Left ventricle myocardium inferior (tissue), 1 donor: ENCODE measurements at regions of chr6 and their contacts with region 1.

Region 1: DNA sequence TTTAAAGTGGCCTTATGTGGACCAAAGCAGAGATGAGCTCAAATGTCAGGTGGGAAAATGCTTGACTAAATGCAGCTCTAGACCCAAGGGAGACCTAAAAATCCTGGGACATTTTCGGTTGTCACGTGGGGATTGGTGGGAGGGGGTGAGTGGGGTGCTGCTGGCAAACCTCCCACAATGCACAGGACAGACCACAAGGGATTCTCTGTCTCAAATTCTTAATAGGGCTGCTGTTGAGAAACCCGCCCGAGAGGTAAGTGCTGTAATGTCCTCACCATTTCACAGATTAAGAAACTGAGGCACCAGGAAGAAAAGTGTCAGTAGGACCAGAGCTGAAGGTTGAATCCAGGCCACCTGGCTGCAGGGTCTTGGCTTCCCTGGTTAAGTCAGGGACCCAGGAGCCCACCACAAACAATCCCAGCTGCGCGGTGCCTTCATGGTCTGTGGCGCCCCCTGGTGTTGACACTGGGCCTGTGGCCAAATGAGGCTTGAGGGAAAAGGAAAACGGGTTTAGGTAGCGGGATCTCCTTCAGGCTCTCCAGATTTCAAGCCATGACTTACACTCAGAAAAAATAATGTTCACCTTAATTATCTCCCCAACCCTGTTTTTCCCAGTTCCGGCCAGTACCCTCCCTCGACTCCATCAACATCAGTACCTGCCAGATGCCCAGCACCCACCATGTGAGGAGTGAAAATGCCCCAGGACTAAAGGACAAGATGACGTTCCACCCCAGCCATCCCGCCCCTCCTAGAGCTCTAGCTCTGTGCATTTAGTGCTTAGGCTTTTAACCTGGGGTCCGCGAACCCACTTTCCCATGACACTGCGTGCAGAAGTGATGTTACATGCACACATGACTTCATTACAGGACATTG is 7.2 kb downstream of the HLA-G start:
- DNase-seq: no peak
- H3K4me3 ChIP-seq: no peak overlapping the region
- H3K27ac ChIP-seq: no peak overlapping the region
- H3K4me1 ChIP-seq: no peaks in the 10 kb centered on the region
- H3K27me3 ChIP-seq: peaks cover 99% of the 10 kb centered on the region
- CTCF ChIP-seq: peak; percentile 94

Region 2: GRCh38 chr6:29685718-29686326 is 149.0 kb before region 1 on chr6:
- intact Hi-C with region 1: no loop called
- DNase-seq: peak; percentile 37
- H3K4me3 ChIP-seq: no peak overlapping the region
- H3K27ac ChIP-seq: no peak overlapping the region
- H3K4me1 ChIP-seq: no peaks in the 10 kb centered on the region
- H3K27me3 ChIP-seq: peaks cover 9% of the 10 kb centered on the region
- CTCF ChIP-seq: peak; percentile 64

Region 3: GRCh38 chr6:29705389-29706231 is 129.2 kb before region 1 on chr6:
- intact Hi-C with region 1: loop called (anchors 5 kb)
- DNase-seq: no peak
- H3K4me3 ChIP-seq: no peak overlapping the region
- H3K27ac ChIP-seq: no peak overlapping the region
- H3K4me1 ChIP-seq: no peaks in the 10 kb centered on the region
- H3K27me3 ChIP-seq: peaks cover 29% of the 10 kb centered on the region
- CTCF ChIP-seq: peak; percentile 75

Region 4: GRCh38 chr6:29737707-29738630 is 96.8 kb before region 1 on chr6:
- intact Hi-C with region 1: loop called (anchors 10 kb)
- DNase-seq: peak; percentile 34
- H3K4me3 ChIP-seq: no peak overlapping the region
- H3K27ac ChIP-seq: peak overlapping the region; percentile 11
- H3K4me1 ChIP-seq: peaks cover 16% of the 10 kb centered on the region
- H3K27me3 ChIP-seq: no peaks in the 10 kb centered on the region
- CTCF ChIP-seq: peak; percentile 77

Region 5: DNA sequence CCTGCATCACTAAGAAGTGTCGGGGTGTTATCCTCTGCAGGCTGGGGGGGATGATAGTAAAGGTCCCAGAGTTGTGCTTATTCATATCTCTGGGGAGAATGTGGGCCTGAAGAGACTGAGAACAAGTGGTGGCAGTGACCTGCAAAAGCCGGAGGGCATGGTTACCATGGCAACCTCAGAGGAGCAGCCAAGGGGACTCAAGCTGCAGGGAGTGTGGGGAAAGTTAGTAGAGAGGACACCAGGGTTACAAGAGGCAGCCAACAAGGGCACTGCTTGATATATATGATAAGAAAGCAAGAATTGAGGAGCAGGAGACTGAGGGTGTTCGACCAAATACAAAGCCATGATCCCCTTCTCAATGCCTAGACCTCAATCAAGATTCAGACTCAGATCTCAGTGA is 65.5 kb before region 1 on chr6:
- intact Hi-C with region 1: no loop called
- DNase-seq: no peak
- H3K4me3 ChIP-seq: no peak overlapping the region
- H3K27ac ChIP-seq: no peak overlapping the region
- H3K4me1 ChIP-seq: no peaks in the 10 kb centered on the region
- H3K27me3 ChIP-seq: peaks cover 17% of the 10 kb centered on the region
- CTCF ChIP-seq: no peak

Region 6: DNA sequence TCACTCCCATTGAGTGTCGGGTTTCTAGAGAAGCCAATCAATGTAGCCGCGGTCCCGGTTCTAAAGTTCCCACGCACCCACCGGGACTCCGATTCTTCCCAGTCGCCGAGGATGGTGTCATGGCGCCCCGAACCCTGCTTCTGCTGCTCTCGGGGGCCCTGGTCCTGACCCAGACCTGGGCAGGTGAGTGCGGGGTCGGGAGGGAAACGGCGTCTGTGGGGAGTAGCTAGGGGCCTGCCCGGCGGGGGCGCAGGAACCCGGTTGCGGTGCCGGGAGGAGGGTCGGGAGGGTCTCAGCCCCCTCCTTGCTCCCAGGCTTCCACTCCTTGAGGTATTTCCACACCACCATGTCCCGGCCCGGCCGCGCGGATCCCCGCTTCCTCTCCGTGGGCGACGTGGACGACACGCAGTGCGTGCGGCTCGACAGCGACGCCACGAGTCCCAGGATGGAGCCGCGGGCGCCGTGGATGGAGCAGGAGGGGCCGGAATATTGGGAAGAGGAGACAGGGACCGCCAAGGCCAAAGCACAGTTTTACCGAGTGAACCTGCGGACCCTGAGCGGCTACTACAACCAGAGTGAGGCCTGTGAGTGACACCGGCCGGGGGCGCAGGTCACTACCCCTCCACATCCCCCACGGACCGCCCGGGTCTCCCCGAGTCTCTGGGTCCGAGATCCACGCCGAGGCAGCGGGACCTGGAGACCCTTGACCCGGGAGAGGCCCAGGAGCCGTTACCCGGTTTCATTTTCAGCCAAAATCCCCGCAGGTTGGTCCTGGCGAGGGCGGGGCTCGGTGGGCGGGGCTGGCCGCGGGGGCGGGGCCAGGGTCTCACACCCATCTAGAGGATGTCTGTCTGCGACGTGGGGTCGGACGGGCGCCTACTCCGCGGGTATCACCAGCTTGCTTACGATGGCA is 42.4 kb before region 1 on chr6:
- intact Hi-C with region 1: no loop called
- DNase-seq: peak; percentile 77
- H3K4me3 ChIP-seq: peak overlapping the region; percentile 88
- H3K27ac ChIP-seq: peak overlapping the region; percentile 48
- H3K4me1 ChIP-seq: peaks cover 22% of the 10 kb centered on the region
- H3K27me3 ChIP-seq: peaks cover 51% of the 10 kb centered on the region
- CTCF ChIP-seq: peak; percentile 82

Region 7: DNA sequence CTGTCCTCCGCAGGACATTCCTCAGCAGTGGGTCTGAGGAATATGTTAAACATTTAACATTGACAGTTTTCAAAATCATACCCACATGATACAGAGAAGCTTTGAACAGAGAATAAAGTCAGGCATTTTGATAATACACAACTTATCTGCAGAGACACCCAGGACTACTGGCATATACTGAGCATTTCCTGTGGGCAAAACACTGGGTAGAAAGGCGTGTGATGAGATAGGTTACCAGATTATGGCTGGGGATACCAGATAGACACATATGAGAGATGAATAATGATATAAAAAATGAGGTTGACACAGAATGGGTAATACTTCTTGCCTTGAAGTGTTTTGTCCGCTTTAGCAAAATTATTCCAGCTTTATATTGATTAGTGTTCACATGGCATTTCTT is 409.8 kb after region 1 on chr6:
- intact Hi-C with region 1: no loop called
- DNase-seq: no peak
- H3K4me3 ChIP-seq: no peak overlapping the region
- H3K27ac ChIP-seq: no peak overlapping the region
- H3K4me1 ChIP-seq: no peaks in the 10 kb centered on the region
- H3K27me3 ChIP-seq: peaks cover 23% of the 10 kb centered on the region
- CTCF ChIP-seq: no peak